Panc1 (cell line): ENCODE measurements at regions of chr19 and their contacts with region 1.

Region 1: GRCh38 chr19:49712397-49712859 is 21.5 kb downstream of the CPT1C start:
- DNase-seq: peak; percentile 10
- ATAC-seq: peak; percentile 54; the same call in 1 of the 2 replicates
- H3K4me3 ChIP-seq: no peak overlapping the region
- H3K27ac ChIP-seq: no peak overlapping the region
- H3K4me1 ChIP-seq: no peaks in the 10 kb centered on the region; the same call in 1 of the 2 replicates
- H3K27me3 ChIP-seq: no peaks in the 10 kb centered on the region
- CTCF ChIP-seq: no peak

Region 2: DNA sequence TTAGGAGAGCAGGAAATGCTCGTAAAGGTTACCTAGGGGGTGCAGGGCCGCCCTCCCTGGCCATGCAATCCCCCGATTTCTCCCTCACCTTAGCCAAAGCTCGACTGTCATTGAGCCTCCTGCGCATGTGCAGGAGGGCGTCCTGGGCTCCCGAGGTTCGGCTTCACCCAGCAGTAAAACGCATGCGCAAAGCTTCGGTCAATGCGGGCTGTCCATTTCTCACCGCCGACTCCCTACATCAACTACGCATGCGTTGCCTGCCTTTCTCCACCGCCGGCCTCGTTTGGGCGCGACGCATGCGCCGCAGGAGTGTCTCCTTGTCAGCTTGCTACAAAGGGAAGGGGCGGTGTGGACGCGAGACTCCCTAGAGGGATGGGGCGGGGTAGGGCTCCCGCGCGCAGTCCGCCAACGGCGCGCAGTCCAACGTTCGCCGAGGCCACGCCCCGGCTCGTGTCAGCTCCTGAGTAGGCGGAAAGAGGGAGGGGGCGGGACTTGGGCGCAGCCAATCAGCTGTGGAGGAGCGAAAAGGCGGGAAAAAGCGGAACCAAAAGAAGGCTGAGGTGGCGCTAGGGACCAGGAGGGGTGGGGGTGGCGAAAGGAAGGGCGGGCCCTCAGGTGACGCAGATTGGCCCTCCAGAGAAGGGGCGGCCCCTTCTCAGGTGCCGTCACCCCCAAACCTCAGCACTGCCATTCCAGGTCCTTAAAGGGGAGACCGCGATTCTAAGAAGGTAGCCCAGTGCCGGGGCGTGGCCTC is 1348.4 kb before region 1 on chr19 and contains the starts of genes SYNGR4 and TMEM143:
- CTCF ChIA-PET with region 1: no interaction called
- POLR2A ChIA-PET with region 1: interaction called, 13 read pairs
- in situ Hi-C with region 1: no loop called
- intact Hi-C with region 1: no loop called
- DNase-seq: peak; percentile 90
- ATAC-seq: peak; percentile 91
- H3K4me3 ChIP-seq: peak within 1 kb of the TSS; percentile 54 to 73
- H3K27ac ChIP-seq: peak within 1 kb of the TSS; percentile 96
- H3K4me1 ChIP-seq: no peaks in the 10 kb centered on the region; the same call in 1 of the 2 replicates
- H3K27me3 ChIP-seq: no peaks in the 10 kb centered on the region
- CTCF ChIP-seq: no peak
- total RNA-seq, gene SYNGR4: 0.39 TPM
- total RNA-seq, gene TMEM143: 6.6 TPM

Region 3: GRCh38 chr19:49701271-49701786 is 11.1 kb before region 1 on chr19:
- CTCF ChIA-PET with region 1: no interaction called
- POLR2A ChIA-PET with region 1: no interaction called
- in situ Hi-C with region 1: no loop called
- intact Hi-C with region 1: no loop called
- DNase-seq: no peak
- ATAC-seq: peak; percentile 74; the same call in 1 of the 2 replicates
- H3K4me3 ChIP-seq: no peak overlapping the region
- H3K27ac ChIP-seq: no peak overlapping the region
- H3K4me1 ChIP-seq: no peaks in the 10 kb centered on the region
- H3K27me3 ChIP-seq: no peaks in the 10 kb centered on the region
- CTCF ChIP-seq: no peak